SK-N-SH (cell line): ENCODE measurements at regions of chr13 and their contacts with region 1.

Region 1: GRCh38 chr13:91375116-91375729 is 23.2 kb upstream of the GPC5 start:
- DNase-seq: peak; percentile 30
- H3K4me3 ChIP-seq: no peak overlapping the region; a peak in 1 of 4 replicates
- H3K27ac ChIP-seq: no peak overlapping the region
- H3K4me1 ChIP-seq: no peaks in the 10 kb centered on the region
- H3K27me3 ChIP-seq: no peaks in the 10 kb centered on the region
- CTCF ChIP-seq: peak; percentile 66
- EP300 ChIP-seq: no peak
- RAD21 ChIP-seq: peak; percentile 72

Region 2: GRCh38 chr13:91776611-91777193 is 401.5 kb after region 1 on chr13:
- CTCF ChIA-PET with region 1: interaction called, 107 read pairs
- POLR2A ChIA-PET with region 1: interaction called, 3 read pairs
- DNase-seq: no peak
- H3K4me3 ChIP-seq: no peak overlapping the region
- H3K27ac ChIP-seq: no peak overlapping the region
- H3K4me1 ChIP-seq: no peaks in the 10 kb centered on the region
- H3K27me3 ChIP-seq: no peaks in the 10 kb centered on the region
- CTCF ChIP-seq: no peak
- EP300 ChIP-seq: no peak
- RAD21 ChIP-seq: no peak